ENCODE measurements at regions of chr16 and their contacts with region 1.

Region 1: DNA sequence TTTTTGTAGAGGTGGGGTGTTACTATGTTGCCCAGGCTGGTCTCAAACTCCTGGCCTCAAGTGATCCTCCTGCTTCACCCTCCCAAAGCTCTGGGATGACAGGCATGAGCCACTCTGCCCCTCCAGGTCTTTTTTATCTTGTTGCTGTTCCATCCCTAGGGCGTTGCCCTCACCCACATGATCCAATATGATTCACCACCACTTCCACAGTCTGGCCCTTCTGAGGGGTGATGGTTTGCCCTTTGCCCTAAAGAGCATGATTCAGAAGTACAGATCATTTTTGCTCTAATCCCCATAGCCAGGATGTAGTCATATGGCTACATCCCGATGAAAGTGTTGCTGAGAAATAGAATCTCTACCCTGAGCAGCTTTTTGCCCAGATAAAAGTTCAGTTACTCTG is 18.8 kb downstream of the STX4 start:
- DNase-seq: no peak
- ATAC-seq: peak; percentile 50 to 76 (median 64)
- H3K4me3 ChIP-seq: no peak overlapping the region
- H3K27ac ChIP-seq: no peak overlapping the region
- H3K4me1 ChIP-seq: no peaks in the 10 kb centered on the region
- H3K27me3 ChIP-seq: no peaks in the 10 kb centered on the region
- CTCF ChIP-seq: no peak

Region 2: GRCh38 chr16:30820952-30821760 is 231.0 kb before region 1 on chr16:
- intact Hi-C with region 1: no loop called
- DNase-seq: no peak
- ATAC-seq: no peak
- H3K4me3 ChIP-seq: no peak overlapping the region
- H3K27ac ChIP-seq: no peak overlapping the region
- H3K4me1 ChIP-seq: no peaks in the 10 kb centered on the region
- H3K27me3 ChIP-seq: no peaks in the 10 kb centered on the region
- CTCF ChIP-seq: no peak

Region 3: DNA sequence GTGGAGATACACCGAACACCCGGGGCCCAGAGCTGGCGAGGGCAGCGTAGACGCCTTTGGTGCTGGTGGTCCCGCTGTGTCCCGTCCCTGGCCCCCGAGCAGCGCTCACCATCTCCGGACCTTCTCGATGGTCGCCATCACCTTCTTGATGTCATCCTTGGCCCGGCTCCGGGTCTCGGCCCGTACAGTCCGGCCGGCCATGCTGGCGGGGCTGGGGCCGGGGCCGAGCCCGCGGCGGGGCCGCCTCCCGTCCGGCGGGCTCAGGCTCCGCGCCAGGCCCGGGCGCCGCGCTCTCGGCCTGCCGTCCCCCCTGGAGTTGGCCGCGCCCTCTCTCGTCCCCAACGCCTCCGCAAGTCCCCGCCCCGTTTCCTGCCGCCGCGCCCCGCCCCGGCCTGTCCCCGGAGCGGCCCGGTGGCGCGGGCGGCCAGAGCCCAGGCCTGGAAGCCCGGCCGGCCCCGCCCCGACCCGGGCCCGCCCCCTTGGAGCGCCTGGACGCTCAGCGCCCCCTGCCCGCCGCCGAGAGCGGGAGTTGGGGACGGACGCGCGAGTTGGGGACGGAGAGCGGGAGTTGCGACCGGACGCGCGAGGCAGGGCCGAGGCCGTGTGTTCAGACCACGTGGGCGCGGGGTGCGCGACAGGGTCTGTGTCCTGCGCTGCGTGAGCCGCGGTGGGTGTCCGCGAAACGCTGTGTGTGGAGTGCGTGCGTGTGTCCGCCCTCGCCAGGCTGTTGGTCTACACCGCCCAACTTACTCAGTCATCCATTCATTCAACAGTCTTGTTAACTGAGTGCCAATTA is 158.2 kb before region 1 on chr16 and contains the start of gene BCL7C:
- intact Hi-C with region 1: no loop called
- DNase-seq: peak; percentile 94 to 96
- ATAC-seq: peak; percentile 81 to 89 (median 84)
- H3K4me3 ChIP-seq: peak within 1 kb of the TSS; percentile 95
- H3K27ac ChIP-seq: peak within 1 kb of the TSS; percentile 93
- H3K4me1 ChIP-seq: peaks cover 13% of the 10 kb centered on the region
- H3K27me3 ChIP-seq: no peaks in the 10 kb centered on the region
- CTCF ChIP-seq: peak; percentile 54
- total RNA-seq, gene BCL7C: 13.9 to 18.1 (median 15.1) TPM

Region 4: DNA sequence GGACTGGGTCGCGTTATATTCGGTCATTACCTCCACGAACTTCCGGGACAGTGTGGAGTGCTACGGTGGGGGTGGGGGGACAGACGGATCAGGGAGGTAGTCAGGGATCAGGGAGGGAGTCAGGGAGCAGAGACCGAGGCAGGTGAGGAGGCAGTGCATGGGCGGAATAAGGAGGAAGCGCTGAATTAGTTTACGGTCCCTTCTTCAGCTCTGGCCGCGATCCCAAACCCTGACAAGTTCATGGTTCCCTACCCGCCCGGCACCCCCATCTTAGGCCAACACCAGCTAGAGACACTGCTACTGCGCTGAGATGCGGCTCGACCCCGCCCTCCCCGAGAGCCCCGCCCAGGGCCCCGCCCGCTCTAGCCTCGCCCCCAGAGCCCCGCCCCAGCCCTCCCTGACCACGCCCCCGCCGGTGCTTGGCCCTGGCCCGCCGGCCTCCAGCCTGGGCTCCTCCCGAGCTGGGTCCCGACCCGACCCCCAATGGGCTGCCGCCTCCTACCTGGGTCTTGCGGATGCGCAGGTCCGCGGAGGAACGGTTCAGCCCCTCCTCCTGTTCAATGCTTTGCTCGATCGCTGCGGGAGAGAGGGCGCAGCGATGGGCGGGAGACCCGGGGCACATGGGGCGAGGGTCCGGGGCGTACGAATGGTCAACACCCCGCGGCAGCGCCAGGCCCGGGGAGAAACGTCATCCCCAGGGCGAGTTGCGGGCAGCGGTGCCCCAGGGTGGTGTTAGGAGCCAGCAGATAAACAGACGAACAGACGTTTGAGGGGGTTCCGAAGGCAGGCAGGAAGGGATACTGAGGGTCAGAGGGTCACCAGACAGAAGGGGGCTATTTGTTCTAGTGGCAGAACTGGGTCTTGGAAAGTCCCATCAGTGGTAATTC is 54.9 kb before region 1 on chr16:
- intact Hi-C with region 1: loop called in 1 of 2 experiments (anchors 10 kb)
- DNase-seq: peak; percentile 88 to 91
- ATAC-seq: peak; percentile 94 to 98 (median 95)
- H3K4me3 ChIP-seq: peak overlapping the region; percentile 73
- H3K27ac ChIP-seq: peak overlapping the region; percentile 55
- H3K4me1 ChIP-seq: peaks cover 6% of the 10 kb centered on the region
- H3K27me3 ChIP-seq: no peaks in the 10 kb centered on the region
- CTCF ChIP-seq: no peak

Region 5: GRCh38 chr16:31354394-31355291 is 302.5 kb after region 1 on chr16 and contains the start of gene ITGAX:
- intact Hi-C with region 1: no loop called
- DNase-seq: peak; percentile 53 to 74
- ATAC-seq: peak in 1 of 4 donors; percentile 35
- H3K4me3 ChIP-seq: no peak within 1 kb of the TSS
- H3K27ac ChIP-seq: no peak within 1 kb of the TSS
- H3K4me1 ChIP-seq: peaks cover 6% of the 10 kb centered on the region
- H3K27me3 ChIP-seq: peaks cover 0 to 4% (median 0%) of the 10 kb centered on the region in 3 donors
- CTCF ChIP-seq: no peak
- total RNA-seq, gene ITGAX: 1.7 to 2.6 (median 2.1) TPM